OCI-LY7 (cell line): ENCODE measurements at regions of chr7 and their contacts with region 1.

Region 1: GRCh38 chr7:73645643-73646174 is 21.4 kb upstream of the MLXIPL start:
- DNase-seq: no peak
- H3K4me3 ChIP-seq: no peak overlapping the region
- H3K27ac ChIP-seq: no peak overlapping the region
- H3K4me1 ChIP-seq: no peaks in the 10 kb centered on the region
- CTCF ChIP-seq: no peak

Region 2: DNA sequence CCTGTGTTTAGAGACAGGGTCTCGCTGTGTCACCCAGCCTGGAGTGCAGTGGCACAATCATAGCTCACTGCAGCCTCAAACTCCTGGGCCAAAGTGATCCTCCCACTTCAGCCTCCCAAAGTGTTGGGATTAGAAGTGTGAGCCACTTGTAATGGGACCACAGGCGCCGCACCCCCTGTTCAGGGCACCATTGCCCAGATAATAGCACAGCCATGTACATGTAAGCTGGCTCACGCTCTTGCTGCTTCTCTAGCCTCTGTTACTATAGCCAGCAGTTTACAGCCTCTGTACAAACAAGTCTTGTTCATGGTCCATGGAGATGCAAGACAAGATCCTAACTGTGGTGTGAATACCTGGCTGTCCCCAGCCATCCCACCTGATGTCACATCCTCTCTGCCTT is 17.2 kb before region 1 on chr7:
- CTCF ChIA-PET with region 1: no interaction called
- POLR2A ChIA-PET with region 1: interaction called, 3 read pairs
- intact Hi-C with region 1: loop called (anchors 1 kb)
- DNase-seq: no peak
- H3K4me3 ChIP-seq: no peak overlapping the region
- H3K27ac ChIP-seq: no peak overlapping the region
- H3K4me1 ChIP-seq: no peaks in the 10 kb centered on the region
- CTCF ChIP-seq: no peak